Right cardiac atrium (tissue), 5 donors: ENCODE measurements at regions of chr19 and their contacts with region 1.

Region 1: DNA sequence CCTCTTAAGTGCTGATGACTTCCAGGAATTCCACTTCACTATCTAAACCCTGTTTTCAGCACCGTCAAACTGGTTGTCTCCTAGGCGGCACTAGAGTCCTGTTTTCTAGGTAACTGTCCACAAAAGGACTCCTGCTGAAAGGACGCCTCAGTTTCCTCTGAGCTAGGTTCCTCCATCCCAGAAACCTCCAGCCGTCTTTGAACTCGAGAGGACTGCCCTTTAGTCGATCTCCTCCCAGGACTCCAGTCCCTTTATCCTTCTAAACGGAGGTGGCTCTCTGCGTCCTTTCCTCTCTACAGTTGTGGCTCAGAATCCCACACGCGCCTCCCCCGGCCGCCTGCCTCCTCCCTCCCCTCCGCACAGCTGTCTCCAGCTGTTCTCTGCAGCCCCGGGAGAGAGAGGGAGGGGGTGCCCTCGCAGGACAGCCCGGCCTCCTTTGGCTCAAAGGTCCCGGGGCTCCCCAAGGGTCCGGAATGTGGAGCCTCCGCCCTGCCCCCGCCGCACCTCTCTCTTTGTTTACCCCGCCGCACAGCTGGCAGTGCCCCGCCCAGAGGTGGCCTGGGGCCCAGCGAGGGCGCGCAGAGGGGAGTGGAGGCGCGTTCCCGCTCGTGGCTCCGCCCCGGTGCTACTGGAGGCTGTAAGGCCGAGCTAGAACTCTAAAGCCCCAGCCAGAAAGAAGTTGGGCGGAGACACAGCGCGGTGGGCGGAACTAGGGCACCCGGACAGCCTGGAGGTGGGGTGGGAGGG is 2.4 kb downstream of the LTBP4 start:
- DNase-seq: peak; percentile 98 to 99 (median 99)
- ATAC-seq: peak; percentile 81 to 83
- H3K4me3 ChIP-seq: peak overlapping the region; percentile 39
- H3K27ac ChIP-seq: peak overlapping the region; percentile 40
- H3K4me1 ChIP-seq: peaks cover 6% of the 10 kb centered on the region
- H3K27me3 ChIP-seq: no peaks in the 10 kb centered on the region

Region 2: DNA sequence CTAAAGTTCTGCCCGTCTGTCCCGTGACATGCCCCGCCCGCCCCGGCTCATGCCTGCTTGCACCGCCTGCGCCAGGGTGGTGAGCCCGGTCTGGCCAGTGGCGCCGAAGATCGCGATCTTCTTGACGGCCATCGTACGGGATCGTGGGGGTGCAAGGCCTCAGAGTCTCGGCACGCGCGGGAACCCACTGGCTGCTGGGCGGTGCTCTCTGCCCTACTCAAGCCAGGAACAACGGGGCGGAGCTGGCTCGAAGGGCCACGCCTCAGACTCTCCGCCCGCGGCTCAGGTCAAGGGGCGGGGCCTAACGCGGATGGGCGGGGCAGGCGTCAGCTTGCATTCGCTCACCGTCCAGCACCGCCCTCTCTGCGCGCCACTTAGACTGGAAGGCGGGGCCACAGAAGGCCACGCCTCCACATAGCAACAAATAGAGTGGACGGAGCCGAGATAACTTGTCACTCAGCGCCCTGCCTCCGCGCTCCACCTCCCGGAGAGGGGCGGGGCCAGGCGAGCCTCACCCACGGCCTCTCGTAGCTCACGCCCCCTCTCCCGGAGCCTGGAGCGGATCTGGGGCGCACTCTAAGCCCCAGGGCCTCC is 137.9 kb before region 1 on chr19 and contains the start of gene BLVRB:
- intact Hi-C with region 1: loop called in 2 of 4 experiments (anchors 5 to 10 kb)
- DNase-seq: peak; percentile 99 to 100 (median 100)
- ATAC-seq: peak; percentile 97
- H3K4me3 ChIP-seq: peak within 1 kb of the TSS; percentile 77
- H3K27ac ChIP-seq: peak within 1 kb of the TSS; percentile 86
- H3K4me1 ChIP-seq: peaks cover 9% of the 10 kb centered on the region
- H3K27me3 ChIP-seq: no peaks in the 10 kb centered on the region
- total RNA-seq, gene BLVRB: 72.0 to 102 (median 86.2) TPM

Region 3: GRCh38 chr19:40570313-40571004 is 33.1 kb before region 1 on chr19:
- intact Hi-C with region 1: no loop called
- DNase-seq: peak; percentile 100
- ATAC-seq: peak; percentile 97 to 98
- H3K4me3 ChIP-seq: peak overlapping the region; percentile 11
- H3K27ac ChIP-seq: no peak overlapping the region
- H3K4me1 ChIP-seq: no peaks in the 10 kb centered on the region
- H3K27me3 ChIP-seq: no peaks in the 10 kb centered on the region

Region 4: DNA sequence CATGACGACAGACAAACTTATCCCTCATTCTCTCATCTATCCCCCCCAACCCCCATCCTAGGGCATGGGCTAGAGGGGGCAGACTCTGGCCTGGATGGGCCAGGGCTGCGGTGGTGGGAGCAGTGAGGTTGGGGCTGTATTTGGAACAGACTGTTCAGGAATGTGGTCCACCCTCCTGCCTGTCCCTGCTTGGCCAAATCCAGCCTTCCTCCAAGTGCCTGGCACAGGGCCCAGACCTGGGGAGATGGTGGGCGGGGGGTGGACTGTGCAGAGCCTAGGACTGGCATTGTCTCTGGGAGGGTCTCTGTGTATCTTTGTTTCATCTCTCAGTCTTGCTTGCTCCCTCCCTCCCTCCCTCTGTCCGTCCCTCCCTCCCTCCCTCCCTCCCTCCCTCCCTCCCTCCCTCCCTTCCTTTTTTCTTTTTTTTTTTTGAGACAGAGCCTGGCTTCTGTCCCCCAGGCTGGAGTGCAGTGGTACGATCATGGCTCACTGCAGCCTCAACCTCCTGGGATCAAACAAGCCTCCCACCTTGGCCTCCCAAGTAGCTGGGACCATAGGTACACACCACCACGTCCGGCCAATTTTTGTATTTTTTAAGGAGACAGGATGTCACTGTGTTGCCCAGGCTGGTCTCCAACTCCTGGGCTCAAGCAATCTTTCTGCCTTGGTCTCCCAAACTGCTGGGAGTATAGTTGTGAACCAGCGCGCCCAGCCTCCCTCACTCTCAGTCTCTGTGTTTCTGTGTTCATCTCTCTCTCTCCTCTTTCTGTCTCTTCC is 209.8 kb after region 1 on chr19:
- intact Hi-C with region 1: no loop called
- DNase-seq: peak; percentile 36 to 81 (median 78)
- ATAC-seq: peak in 1 of 2 donors; percentile 0
- H3K4me3 ChIP-seq: no peak overlapping the region
- H3K27ac ChIP-seq: no peak overlapping the region
- H3K4me1 ChIP-seq: peaks cover 2% of the 10 kb centered on the region
- H3K27me3 ChIP-seq: no peaks in the 10 kb centered on the region